Caco-2 (cell line): ENCODE measurements at regions of chr9 and their contacts with region 1.

Region 1: DNA sequence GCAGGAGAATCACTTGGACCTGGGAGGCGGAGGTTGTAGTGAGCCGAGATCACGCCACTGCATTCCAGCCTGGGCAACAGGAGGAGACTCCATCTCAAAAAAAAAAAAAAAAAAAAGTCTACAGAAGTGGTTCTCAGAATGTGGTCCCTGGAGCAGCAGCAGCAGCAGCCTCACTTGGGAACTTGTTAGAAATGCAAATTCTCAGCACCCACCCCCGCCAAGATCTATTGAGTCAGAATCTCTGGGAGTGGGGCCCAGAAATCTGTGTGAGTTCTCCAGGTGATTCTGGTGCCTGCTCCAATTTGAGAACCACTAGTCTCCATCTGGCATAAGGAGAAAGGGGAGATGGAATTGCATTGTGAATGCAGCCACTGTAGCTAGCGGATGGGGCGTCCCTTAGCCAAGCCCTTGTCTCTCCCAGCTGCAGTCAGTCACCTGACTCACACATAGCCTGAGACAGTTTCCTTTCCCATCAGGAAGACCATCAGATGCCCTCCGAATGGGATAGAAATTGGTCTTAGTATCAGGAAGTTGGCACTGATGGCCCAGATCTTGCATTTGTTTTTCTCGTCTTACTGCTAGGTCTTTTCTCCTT is 12.2 kb upstream of the PTCH1 start:
- DNase-seq: no peak
- H3K4me3 ChIP-seq: no peak overlapping the region
- H3K4me3 Mint-ChIP-seq: no peak overlapping the region
- H3K27ac Mint-ChIP-seq: no peak overlapping the region
- H3K4me1 ChIP-seq: no peaks in the 10 kb centered on the region
- H3K4me1 Mint-ChIP-seq: no peaks in the 10 kb centered on the region
- H3K27me3 ChIP-seq: peaks cover 1% of the 10 kb centered on the region; the same call in 1 of the 2 replicates
- H3K27me3 Mint-ChIP-seq: peaks cover 15% of the 10 kb centered on the region
- CTCF ChIP-seq: no peak

Region 2: DNA sequence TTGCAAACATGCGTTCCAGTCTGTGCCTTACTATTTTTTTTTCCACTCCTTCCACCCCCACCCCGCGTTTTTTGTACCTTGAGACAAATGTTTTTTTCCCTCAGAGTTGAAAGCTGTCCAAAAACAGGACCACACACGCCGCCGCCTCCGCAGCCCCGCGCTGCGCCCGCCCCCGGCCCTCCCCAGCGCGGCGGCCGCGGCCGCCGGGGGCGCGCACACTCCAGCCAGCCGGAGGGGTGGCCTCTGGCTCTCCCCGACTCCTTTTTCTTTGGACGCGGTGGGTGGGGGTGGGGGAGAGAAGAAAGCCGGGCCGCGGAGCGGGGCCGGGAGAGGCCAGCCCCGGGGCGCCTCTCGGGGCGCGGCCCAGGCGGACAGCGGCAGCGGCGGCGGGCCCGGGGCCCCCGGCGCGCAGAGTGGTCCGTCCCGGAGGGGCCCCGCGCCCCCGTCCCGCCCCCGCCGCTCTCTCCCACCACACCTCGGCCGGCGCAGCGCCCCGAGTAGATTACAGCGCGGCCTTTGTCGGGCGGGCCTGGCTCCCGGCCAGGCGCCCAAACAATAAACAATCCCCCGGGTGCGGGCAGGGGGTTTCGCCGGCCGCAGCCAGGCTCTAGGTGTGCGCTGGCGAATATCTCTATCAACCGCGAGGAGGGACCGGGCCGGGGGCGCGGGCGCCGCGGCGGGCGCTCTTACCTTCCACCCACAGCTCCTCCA is 23.1 kb before region 1 on chr9:
- CTCF ChIA-PET with region 1: interaction called, 9 read pairs
- POLR2A ChIA-PET with region 1: interaction called, 15 read pairs
- intact Hi-C with region 1: no loop called
- DNase-seq: peak; percentile 66 to 70
- H3K4me3 ChIP-seq: peak overlapping the region; percentile 94
- H3K4me3 Mint-ChIP-seq: peak overlapping the region; percentile 93
- H3K27ac Mint-ChIP-seq: peak overlapping the region; percentile 70
- H3K4me1 ChIP-seq: peaks cover 5% of the 10 kb centered on the region
- H3K4me1 Mint-ChIP-seq: peaks cover 23% of the 10 kb centered on the region
- H3K27me3 ChIP-seq: no peaks in the 10 kb centered on the region
- H3K27me3 Mint-ChIP-seq: no peaks in the 10 kb centered on the region
- CTCF ChIP-seq: no peak